ENCODE measurements at regions of chr11 and their contacts with region 1.

Region 1: GRCh38 chr11:77039491-77040400 is 5.5 kb downstream of the B3GNT6 start:
- DNase-seq: no peak
- ATAC-seq: peak; percentile 50 to 58 (median 51)
- H3K4me3 ChIP-seq: peak overlapping the region; percentile 14 to 24 (median 22)
- H3K27ac ChIP-seq: no peak overlapping the region
- H3K4me1 ChIP-seq: no peaks in the 10 kb centered on the region
- H3K27me3 ChIP-seq: peaks cover 0 to 6% of the 10 kb centered on the region in 2 donors
- CTCF ChIP-seq: peak in 3 of 4 donors; percentile 27 to 37 (median 27)
- POLR2A ChIP-seq: no peak

Region 2: DNA sequence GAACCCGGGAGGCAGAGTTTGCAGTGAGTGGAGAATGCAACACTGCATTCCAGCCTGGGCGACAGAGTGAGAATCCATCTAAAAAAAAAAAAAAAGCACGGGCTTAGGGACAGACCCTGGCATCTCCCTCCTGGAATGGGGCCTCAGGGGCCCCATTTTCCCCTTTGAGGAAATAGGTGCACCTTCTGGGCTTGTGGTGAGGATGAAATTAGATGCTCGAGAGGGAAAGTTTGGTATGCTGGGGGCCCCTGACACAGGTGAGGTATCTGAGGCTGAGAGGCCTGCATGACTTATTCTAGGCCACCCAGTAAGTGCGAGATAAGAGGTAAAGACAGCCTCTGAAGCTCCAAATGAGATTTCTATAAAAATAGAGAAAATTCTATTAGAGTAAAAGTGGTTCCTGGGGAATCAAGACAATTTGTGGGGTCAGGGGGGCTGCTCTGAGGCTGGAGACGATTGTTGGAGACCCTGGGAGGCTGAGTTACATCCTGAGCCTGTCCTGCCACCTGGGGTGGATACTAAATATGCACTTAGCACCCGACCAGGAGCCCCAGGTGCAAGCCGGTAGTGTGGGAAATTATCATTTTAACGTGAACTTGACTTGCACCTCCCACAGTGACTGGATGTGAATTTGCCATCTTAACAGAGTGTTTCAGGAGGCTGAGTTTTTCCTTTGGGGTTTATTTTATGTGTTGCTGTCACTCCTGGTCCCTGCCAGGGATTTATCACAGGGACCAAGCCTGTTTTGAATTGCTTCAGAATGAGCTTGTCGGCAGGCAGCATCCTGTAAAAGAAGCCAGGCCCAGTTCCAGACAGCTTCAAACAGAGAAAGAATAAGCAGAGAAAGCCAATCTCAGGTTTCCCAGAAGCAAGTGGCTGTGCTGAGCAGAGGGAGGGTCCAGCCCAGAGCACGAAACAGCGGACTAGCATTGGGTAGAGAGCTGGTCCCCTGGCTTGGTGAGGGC is 305.0 kb before region 1 on chr11:
- intact Hi-C with region 1: loop called in 1 of 2 experiments (anchors 10 kb)
- DNase-seq: no peak
- ATAC-seq: no peak
- H3K4me3 ChIP-seq: no peak overlapping the region
- H3K27ac ChIP-seq: no peak overlapping the region
- H3K4me1 ChIP-seq: peaks cover 0 to 16% (median 0%) of the 10 kb centered on the region in 4 donors
- H3K27me3 ChIP-seq: no peaks in the 10 kb centered on the region
- CTCF ChIP-seq: no peak
- POLR2A ChIP-seq: no peak

Region 3: DNA sequence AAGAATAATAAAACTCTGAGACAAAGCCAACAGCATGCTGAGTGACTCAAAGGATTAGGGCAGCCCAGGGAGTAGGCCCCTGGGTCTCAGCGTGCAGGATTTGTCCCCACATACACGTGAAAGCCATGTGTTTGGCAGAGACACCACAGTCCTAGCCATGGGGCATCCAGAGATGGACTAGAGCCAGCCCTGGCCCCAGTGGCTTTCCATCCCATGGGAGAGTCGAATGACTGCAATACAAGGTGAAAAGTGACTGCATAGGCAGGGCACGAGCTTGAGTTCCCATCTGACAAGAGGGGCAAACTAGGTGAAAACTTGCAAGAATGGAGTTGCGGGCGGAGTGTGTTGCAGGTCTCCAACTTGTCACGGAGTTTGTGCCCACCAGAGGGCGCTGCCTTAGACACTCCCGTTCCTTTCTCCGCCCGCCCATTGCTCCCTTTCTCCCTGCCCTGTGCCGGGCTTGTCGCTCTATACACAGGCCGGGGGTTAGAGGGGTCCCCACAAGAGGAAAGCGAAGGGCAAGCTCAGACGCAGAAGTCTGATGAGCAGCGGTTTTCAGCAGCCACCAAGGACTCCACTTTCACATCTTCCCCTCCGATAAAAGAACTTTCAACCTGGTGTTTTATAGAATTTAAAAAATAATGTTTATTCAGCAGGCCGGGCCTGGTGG is 232.4 kb before region 1 on chr11:
- intact Hi-C with region 1: loop called in 1 of 2 experiments (anchors 10 kb)
- DNase-seq: peak; percentile 82 to 88 (median 85)
- ATAC-seq: peak; percentile 66 to 77 (median 74)
- H3K4me3 ChIP-seq: no peak overlapping the region
- H3K27ac ChIP-seq: peak overlapping the region in 1 of 3 donors; percentile 12
- H3K4me1 ChIP-seq: peaks cover 0 to 24% (median 9%) of the 10 kb centered on the region in 4 donors
- H3K27me3 ChIP-seq: no peaks in the 10 kb centered on the region
- CTCF ChIP-seq: peak; percentile 63 to 85 (median 76)
- POLR2A ChIP-seq: no peak